Activated CD4-positive, alpha-beta T cell treated with anti-CD3 and anti-CD28 coated beads for 36 hours (primary cell): ENCODE measurements at regions of chr19 and their contacts with region 1.

Region 1: DNA sequence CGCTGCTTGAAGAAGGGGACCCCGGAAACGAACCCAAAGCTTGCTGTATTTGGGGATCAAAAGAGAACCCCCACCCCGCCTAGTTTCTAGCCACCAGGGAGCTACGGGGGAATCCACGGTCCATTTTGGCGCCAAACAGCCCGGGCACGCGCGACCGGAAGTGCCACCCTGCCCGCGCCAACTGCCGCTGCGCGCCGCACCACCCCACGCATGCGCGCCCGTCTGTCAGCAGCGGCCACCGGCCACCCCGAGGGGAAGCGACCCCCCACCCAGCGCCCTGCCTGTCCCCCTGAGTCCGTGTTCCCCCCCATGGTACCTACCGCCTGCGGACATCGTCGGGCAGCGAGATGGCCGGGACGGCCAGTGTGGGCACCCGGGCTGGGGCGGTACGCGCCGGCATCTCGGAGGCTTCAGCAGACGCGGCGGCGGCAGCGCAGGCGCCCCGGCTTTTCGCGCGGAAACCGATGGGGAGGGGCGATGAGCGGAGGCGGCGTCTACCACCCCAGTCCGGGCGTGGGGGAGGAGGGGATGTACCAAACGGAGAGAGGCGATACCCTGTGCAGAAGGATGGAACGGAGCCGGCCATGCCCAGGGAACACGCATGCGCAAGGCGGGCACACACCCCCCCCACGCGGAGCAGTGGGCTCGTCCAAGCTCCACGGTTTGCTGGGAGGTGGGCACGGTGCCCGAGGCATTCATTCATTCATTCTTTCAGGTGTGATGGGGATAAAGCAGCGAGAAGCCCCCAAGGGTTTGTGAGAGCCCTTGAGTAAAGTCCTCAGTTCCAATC is at the start of gene DNMT1:
- DNase-seq: peak; percentile 99
- ATAC-seq: peak; percentile 94
- H3K4me3 Mint-ChIP-seq: peak within 1 kb of the TSS; percentile 89
- H3K27ac Mint-ChIP-seq: peak within 1 kb of the TSS; percentile 97
- H3K4me1 Mint-ChIP-seq: peaks cover 49% of the 10 kb centered on the region
- H3K27me3 Mint-ChIP-seq: no peaks in the 10 kb centered on the region
- total RNA-seq, gene DNMT1: 374 to 385 TPM

Region 2: DNA sequence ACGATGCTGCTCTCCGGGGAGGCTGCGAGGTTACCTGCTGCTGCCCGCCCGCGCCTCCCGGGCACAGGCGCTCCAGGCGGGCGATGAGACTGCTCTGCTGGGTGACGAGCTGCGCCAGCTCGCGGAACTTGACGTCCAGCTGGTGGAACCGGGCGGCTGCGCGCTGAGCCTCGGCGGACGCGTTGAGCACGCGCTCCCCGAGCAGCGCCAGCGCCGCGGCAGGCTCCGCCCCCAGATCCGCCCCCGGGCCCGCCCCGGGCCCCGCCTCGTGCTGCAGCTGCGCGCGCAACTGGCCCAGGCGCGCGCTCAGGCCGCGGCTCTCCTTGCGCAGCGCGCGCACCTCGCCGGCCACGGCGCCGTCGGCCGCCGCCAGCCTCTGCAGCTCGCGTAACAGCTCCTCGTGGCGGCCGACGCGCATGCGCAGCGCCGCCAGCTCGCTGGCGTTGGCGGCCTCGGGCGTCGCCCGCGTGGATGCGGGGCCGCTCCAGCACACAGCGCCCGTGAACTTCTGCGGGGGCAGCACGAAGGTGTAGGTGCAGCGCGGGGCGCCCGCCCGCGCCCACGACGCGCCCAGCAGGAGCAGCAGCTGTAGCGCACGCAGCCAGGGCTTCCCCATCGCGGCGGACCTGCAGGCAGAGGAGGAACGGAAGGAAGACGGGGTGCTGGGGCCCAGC is 98.6 kb before region 1 on chr19:
- CTCF ChIA-PET with region 1: interaction called, 3 read pairs
- POLR2A ChIA-PET with region 1: no interaction called
- intact Hi-C with region 1: loop called in 1 of 2 experiments (anchors 1 kb)
- DNase-seq: peak; percentile 94
- ATAC-seq: peak; percentile 90
- H3K4me3 Mint-ChIP-seq: peak overlapping the region; percentile 56
- H3K27ac Mint-ChIP-seq: peak overlapping the region; percentile 69
- H3K4me1 Mint-ChIP-seq: peaks cover 26% of the 10 kb centered on the region
- H3K27me3 Mint-ChIP-seq: no peaks in the 10 kb centered on the region

Region 3: GRCh38 chr19:10142701-10143375 is 51.9 kb before region 1 on chr19:
- CTCF ChIA-PET with region 1: no interaction called
- POLR2A ChIA-PET with region 1: no interaction called
- intact Hi-C with region 1: no loop called
- DNase-seq: peak; percentile 45
- ATAC-seq: peak; percentile 82
- H3K4me3 Mint-ChIP-seq: no peak overlapping the region
- H3K27ac Mint-ChIP-seq: peak overlapping the region; percentile 79
- H3K4me1 Mint-ChIP-seq: peaks cover 32% of the 10 kb centered on the region
- H3K27me3 Mint-ChIP-seq: no peaks in the 10 kb centered on the region

Region 4: DNA sequence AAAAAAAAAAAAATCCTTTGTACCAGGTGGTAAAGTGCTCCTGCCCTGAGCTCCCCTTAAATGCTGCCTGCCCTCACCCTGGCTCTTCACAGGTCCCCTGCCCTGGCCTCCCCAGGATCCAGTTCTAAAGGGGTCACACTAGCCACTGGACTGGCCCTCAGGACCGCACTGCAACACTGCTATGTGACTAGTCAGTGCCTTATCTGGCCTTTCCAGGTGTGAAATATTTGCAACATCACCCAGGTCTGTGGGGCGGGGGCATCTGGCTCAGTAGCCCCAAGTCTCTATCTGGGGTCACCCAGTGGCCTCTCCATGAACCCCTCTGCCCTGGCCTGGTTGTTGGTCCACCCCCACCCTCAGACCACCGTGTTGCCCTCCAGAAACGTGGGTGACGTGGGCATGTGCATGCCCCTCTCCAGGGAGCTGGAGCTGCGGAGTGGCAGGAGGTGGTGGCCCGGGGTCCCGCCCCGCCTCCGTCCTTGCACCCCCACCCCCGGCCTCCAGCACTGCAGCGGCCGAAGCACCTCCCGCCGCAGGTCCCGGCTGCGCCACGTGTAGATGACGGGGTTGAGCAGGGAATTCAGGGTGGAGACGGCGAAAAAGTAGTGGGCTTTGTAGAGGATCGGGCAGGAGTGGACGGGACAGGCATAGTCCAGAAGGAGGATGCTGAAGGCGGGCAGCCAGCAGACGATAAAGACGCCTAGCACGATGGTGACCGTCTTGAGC is 29.0 kb after region 1 on chr19:
- CTCF ChIA-PET with region 1: interaction called, 6 read pairs
- POLR2A ChIA-PET with region 1: interaction called, 10 read pairs
- intact Hi-C with region 1: no loop called
- DNase-seq: no peak
- ATAC-seq: no peak
- H3K4me3 Mint-ChIP-seq: no peak overlapping the region
- H3K27ac Mint-ChIP-seq: no peak overlapping the region
- H3K4me1 Mint-ChIP-seq: peaks cover 2% of the 10 kb centered on the region
- H3K27me3 Mint-ChIP-seq: no peaks in the 10 kb centered on the region

Region 5: DNA sequence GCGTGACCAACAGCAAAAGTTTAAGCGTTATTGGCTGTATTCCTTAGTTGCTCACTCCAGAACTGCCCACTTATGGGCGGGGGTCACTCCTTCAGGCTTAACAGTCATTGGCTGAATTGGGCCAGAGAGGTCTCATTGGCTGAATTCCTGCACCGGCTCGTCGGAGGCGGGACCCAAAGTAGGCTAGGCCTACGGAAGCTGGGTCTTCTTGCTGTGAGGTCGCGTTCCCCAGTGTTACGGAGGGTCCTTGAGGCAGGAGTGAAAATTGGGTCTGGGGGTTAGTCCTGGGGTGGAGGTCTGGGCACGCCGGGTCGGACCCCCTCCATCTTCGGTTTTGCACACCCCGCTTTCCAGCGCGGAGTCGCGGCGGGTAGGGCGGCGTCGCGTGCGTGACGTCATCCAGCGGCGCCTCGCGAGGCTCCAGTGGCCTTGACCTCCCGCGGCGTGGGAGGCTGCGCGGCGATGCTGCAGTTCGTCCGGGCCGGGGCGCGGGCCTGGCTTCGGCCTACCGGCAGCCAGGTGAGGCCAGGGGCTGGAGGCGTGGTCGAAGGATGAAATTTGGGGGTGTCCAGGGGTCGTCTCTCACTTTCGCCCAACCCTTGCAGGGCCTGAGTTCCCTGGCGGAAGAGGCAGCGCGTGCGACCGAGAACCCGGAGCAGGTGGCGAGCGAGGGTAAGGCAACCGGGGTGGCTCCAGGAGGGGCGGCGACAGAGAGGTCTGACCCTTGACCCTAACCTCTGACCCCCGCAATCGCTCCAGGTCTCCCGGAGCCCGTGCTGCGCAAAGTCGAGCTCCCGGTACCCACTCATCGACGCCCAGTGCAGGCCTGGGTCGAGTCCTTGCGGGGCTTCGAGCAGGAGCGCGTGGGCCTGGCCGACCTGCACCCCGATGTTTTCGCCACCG is 57.3 kb after region 1 on chr19 and contains the start of gene MRPL4:
- CTCF ChIA-PET with region 1: interaction called, 13 read pairs
- POLR2A ChIA-PET with region 1: interaction called, 8 read pairs
- intact Hi-C with region 1: loop called (anchors 1 kb)
- DNase-seq: peak; percentile 97
- ATAC-seq: peak; percentile 99
- H3K4me3 Mint-ChIP-seq: peak within 1 kb of the TSS; percentile 97
- H3K27ac Mint-ChIP-seq: peak within 1 kb of the TSS; percentile 97
- H3K4me1 Mint-ChIP-seq: peaks cover 18% of the 10 kb centered on the region
- H3K27me3 Mint-ChIP-seq: no peaks in the 10 kb centered on the region
- total RNA-seq, gene MRPL4: 130 to 140 TPM

Region 6: DNA sequence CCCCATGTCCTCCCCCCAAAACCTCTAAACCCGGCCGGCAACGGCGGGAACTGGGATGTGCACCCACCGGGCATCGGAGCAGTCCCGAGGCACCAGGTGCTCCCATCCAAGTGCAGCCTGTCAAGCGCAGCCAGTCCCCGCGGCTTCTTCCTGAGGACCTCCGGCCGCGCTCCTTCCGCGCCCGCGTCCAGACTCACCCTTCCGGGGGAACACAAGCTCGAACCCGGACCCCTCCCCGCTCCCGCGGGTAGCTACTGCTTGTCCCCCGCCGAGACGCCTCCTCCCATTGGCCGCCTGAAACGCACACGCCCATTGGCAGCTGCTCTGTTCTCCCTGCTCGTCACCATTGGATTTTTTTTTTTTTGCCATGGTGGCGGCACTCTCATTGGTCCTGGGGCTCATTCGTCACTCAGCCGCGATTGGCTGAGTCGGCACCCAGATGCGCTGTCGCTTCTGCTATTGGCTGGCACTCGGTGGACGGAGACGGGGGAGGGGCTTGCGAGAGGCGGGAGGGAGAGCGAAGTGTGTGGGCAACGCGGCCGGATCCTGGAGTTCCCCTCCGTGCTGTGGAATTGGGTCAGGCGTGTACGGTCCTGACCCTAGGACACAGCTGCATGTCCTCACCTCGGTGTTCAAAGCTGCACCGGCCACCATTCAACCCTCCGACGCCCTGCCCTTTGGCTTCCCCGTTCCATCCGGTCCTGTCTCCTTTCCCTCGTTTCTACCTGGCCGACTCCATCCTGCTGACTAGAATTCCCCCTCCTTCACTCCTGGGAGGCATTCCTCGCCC is 185.8 kb after region 1 on chr19 and contains the start of gene TYK2:
- CTCF ChIA-PET with region 1: no interaction called
- POLR2A ChIA-PET with region 1: interaction called, 3 read pairs
- intact Hi-C with region 1: loop called in 1 of 2 experiments (anchors 1 kb)
- DNase-seq: peak; percentile 97
- ATAC-seq: peak; percentile 99
- H3K4me3 Mint-ChIP-seq: peak within 1 kb of the TSS; percentile 86
- H3K27ac Mint-ChIP-seq: peak within 1 kb of the TSS; percentile 96
- H3K4me1 Mint-ChIP-seq: peaks cover 22% of the 10 kb centered on the region
- H3K27me3 Mint-ChIP-seq: no peaks in the 10 kb centered on the region
- total RNA-seq, gene TYK2: 151 to 197 TPM

Region 7: DNA sequence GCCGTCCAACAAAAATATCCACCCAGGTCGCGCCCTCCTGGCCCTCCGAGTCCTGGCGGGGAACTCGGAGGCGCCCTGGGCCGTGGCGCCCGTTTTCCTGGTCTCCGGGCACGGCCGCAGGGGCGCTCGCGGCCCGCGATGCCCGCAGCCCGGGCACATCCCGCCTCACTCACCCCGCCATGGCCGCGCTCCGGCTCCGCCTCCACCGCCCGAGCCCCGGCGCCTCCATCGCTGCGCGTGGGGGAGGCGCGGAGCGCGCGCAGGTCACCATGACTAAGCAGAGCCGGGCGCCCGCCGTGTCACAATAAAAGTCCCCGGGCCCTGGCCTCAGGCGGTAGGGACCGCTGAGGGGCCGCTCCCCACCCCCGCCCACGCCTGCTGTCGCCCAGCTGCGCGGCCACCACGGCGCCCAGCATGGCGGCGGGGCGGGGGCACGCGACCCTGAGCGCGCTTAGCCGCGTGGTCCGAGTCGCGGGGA is 307.9 kb after region 1 on chr19:
- CTCF ChIA-PET with region 1: no interaction called
- POLR2A ChIA-PET with region 1: interaction called, 4 read pairs
- intact Hi-C with region 1: loop called in 1 of 2 experiments (anchors 2 kb)
- DNase-seq: peak; percentile 95
- ATAC-seq: peak; percentile 91
- H3K4me3 Mint-ChIP-seq: peak overlapping the region; percentile 91
- H3K27ac Mint-ChIP-seq: peak overlapping the region; percentile 95
- H3K4me1 Mint-ChIP-seq: peaks cover 30% of the 10 kb centered on the region
- H3K27me3 Mint-ChIP-seq: no peaks in the 10 kb centered on the region